ENCODE measurements at regions of chr1 and their contacts with region 1.

Region 1: GRCh38 chr1:109099938-109100773 is 9.6 kb downstream of the TMEM167B start:
- DNase-seq: peak; percentile 98
- ATAC-seq: peak; percentile 94
- H3K4me3 Mint-ChIP-seq: peak overlapping the region; percentile 98
- H3K27ac Mint-ChIP-seq: peak overlapping the region; percentile 98
- H3K4me1 Mint-ChIP-seq: peaks cover 5% of the 10 kb centered on the region
- H3K27me3 Mint-ChIP-seq: no peaks in the 10 kb centered on the region
- CTCF ChIP-seq: peak; percentile 73

Region 2: GRCh38 chr1:108843390-108844137 is 256.6 kb before region 1 on chr1:
- CTCF ChIA-PET with region 1: no interaction called
- POLR2A ChIA-PET with region 1: no interaction called
- intact Hi-C with region 1: no loop called
- DNase-seq: no peak
- ATAC-seq: no peak
- H3K4me3 Mint-ChIP-seq: no peak overlapping the region
- H3K27ac Mint-ChIP-seq: no peak overlapping the region
- H3K4me1 Mint-ChIP-seq: no peaks in the 10 kb centered on the region
- H3K27me3 Mint-ChIP-seq: no peaks in the 10 kb centered on the region
- CTCF ChIP-seq: no peak

Region 3: GRCh38 chr1:108963052-108963686 is 137.0 kb before region 1 on chr1 and contains the start of gene CLCC1:
- CTCF ChIA-PET with region 1: no interaction called
- POLR2A ChIA-PET with region 1: interaction called, 19 read pairs
- intact Hi-C with region 1: no loop called
- DNase-seq: peak; percentile 96
- ATAC-seq: peak; percentile 97
- H3K4me3 Mint-ChIP-seq: peak within 1 kb of the TSS; percentile 81
- H3K27ac Mint-ChIP-seq: peak within 1 kb of the TSS; percentile 88
- H3K4me1 Mint-ChIP-seq: peaks cover 26% of the 10 kb centered on the region
- H3K27me3 Mint-ChIP-seq: peaks cover 2% of the 10 kb centered on the region
- CTCF ChIP-seq: no peak
- total RNA-seq, gene CLCC1: 14.3 to 15.2 TPM

Region 4: GRCh38 chr1:109027841-109028240 is 72.3 kb before region 1 on chr1:
- CTCF ChIA-PET with region 1: interaction called, 10 read pairs
- POLR2A ChIA-PET with region 1: no interaction called
- intact Hi-C with region 1: no loop called
- DNase-seq: no peak
- ATAC-seq: no peak
- H3K4me3 Mint-ChIP-seq: no peak overlapping the region
- H3K27ac Mint-ChIP-seq: no peak overlapping the region
- H3K4me1 Mint-ChIP-seq: peaks cover 2% of the 10 kb centered on the region
- H3K27me3 Mint-ChIP-seq: no peaks in the 10 kb centered on the region
- CTCF ChIP-seq: no peak

Region 5: DNA sequence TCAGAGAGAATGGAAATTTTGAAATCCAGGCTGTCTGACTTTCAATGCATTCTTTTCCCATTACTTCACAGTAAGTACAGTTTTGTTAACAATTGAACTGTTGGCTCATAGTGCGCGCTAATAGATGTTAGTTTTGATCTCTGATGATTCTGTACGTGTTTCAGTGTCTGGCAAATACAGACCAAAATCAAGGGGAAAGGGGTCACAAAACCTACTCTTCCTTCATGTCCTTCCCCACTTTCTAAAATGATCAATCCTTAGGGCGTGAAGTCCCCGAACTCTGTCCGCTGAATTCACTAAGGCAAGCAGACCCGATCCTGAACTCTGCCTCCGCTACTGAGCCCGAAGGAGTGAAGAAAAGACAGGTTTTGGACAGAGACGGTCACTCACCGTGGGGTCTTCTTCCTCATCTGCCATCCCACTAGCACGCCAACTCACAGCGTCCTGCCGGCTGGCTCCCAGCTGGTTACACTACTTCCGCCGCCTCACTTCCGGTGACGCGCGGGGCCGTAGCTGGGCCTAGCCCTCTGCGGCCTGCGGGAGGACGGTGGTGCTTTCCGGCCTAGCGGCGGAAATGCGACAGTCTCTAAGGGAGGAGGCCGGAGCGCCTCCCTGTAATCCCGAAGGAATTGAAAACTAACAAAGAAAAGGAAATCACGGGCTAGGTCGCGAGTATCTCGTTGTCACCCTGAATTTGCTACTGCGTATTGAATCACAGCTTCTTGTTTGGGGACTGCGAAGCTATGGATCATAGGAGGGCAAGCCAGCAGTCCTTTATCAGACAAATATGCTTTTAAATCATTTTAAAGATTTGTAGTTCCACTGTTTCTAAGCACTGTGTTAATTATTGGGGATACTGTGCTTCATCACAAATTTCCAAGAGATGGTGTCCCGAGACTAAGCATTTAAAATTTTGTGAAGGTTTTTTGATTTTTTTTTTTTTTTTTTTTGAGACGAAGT is 24.3 kb before region 1 on chr1 and contains the start of gene TAF13:
- CTCF ChIA-PET with region 1: interaction called, 5 read pairs
- POLR2A ChIA-PET with region 1: interaction called, 14 read pairs
- intact Hi-C with region 1: no loop called
- DNase-seq: peak; percentile 92
- ATAC-seq: peak; percentile 99
- H3K4me3 Mint-ChIP-seq: peak within 1 kb of the TSS; percentile 93
- H3K27ac Mint-ChIP-seq: peak within 1 kb of the TSS; percentile 96
- H3K4me1 Mint-ChIP-seq: peaks cover 15% of the 10 kb centered on the region
- H3K27me3 Mint-ChIP-seq: no peaks in the 10 kb centered on the region
- CTCF ChIP-seq: no peak
- total RNA-seq, gene TAF13: 18.5 to 19.0 TPM

Region 6: DNA sequence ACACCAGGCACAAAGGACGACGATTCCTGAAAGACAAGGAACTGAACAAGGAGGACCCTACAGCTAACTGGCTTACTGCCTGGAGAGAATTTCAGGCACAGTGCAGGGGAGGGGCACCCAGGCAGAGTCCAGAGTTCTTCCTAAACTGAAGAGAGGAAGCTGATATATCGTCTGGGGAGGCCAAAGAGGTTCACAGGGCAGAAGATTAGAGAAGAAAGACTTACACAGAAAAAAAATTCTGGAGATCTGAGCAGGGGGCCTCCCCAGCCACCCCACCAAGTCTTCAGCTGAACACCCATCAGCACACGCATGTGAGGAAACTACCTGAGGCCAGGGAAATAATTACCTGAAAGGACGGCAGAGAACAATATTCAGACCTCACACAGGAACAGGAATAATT is 273.0 kb after region 1 on chr1:
- CTCF ChIA-PET with region 1: no interaction called
- POLR2A ChIA-PET with region 1: no interaction called
- intact Hi-C with region 1: no loop called
- DNase-seq: no peak
- ATAC-seq: peak; percentile 18
- H3K4me3 Mint-ChIP-seq: no peak overlapping the region
- H3K27ac Mint-ChIP-seq: no peak overlapping the region
- H3K4me1 Mint-ChIP-seq: peaks cover 24% of the 10 kb centered on the region
- H3K27me3 Mint-ChIP-seq: peaks cover 16% of the 10 kb centered on the region
- CTCF ChIP-seq: no peak

Measured in activated CD8-positive, alpha-beta T cell treated with anti-CD3 and anti-CD28 coated beads for 36 hours (primary cell).